ENCODE measurements at regions of chr6 and their contacts with region 1.

Region 1: DNA sequence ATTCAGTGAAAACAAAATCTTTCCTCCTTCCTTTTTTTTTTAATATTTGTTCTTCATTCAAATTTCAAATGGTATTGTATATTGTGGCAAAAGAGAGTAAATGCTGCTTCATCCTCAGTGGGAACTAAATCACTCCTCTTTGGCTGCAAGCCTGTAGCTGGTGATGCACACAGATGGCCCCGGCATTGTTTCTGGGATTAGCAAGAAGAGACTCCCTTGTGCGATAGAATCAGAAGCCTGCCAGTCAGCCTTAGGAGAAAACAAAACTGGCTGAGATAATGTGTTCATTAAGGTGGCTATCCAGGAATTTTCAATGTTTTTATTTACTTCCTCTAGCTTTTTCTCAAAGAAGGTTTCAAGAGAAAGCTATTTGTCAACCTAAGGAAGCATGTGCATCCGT is 20.7 kb upstream of the ELOVL2 start:
- DNase-seq: no peak
- ATAC-seq: no peak
- H3K4me3 Mint-ChIP-seq: no peak overlapping the region
- H3K27ac Mint-ChIP-seq: no peak overlapping the region
- H3K4me1 Mint-ChIP-seq: peaks cover 4% of the 10 kb centered on the region
- H3K27me3 Mint-ChIP-seq: no peaks in the 10 kb centered on the region
- CTCF ChIP-seq: no peak

Region 2: GRCh38 chr6:9745476-9745875 is 1319.4 kb before region 1 on chr6:
- CTCF ChIA-PET with region 1: no interaction called
- POLR2A ChIA-PET with region 1: no interaction called
- DNase-seq: no peak
- ATAC-seq: no peak
- H3K4me3 Mint-ChIP-seq: no peak overlapping the region
- H3K27ac Mint-ChIP-seq: no peak overlapping the region
- H3K4me1 Mint-ChIP-seq: no peaks in the 10 kb centered on the region
- H3K27me3 Mint-ChIP-seq: no peaks in the 10 kb centered on the region
- CTCF ChIP-seq: no peak

Region 3: DNA sequence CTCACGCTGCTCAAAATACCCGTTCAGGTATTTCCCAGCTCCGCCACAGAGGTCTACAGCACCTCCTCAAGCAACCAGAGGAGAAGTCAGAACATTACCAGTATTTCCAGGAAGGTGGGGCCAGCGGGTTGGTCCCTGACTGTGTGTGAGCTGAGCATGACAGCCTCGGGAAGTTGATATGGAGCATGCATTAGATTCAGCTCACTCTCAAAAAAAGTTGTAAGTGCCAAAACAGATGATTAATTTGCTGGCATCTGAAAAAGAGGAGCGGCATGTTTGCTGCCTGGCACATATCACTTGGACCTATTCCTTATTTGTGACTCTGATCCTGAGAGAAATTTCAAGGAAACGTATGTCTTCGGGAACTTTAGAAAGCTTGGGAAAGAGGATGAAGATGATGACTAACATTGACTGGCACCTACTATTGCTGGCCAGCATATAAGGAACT is 53.0 kb before region 1 on chr6:
- CTCF ChIA-PET with region 1: interaction called, 10 read pairs
- POLR2A ChIA-PET with region 1: no interaction called
- DNase-seq: peak; percentile 44
- ATAC-seq: peak; percentile 93
- H3K4me3 Mint-ChIP-seq: no peak overlapping the region
- H3K27ac Mint-ChIP-seq: 0 out of 2 replicates have a peak overlapping the region, but pooled peaks have one; percentile 43
- H3K4me1 Mint-ChIP-seq: peaks cover 30% of the 10 kb centered on the region
- H3K27me3 Mint-ChIP-seq: no peaks in the 10 kb centered on the region
- CTCF ChIP-seq: no peak